PC-9 (cell line): ENCODE measurements at regions of chr4 and their contacts with region 1.

Region 1: DNA sequence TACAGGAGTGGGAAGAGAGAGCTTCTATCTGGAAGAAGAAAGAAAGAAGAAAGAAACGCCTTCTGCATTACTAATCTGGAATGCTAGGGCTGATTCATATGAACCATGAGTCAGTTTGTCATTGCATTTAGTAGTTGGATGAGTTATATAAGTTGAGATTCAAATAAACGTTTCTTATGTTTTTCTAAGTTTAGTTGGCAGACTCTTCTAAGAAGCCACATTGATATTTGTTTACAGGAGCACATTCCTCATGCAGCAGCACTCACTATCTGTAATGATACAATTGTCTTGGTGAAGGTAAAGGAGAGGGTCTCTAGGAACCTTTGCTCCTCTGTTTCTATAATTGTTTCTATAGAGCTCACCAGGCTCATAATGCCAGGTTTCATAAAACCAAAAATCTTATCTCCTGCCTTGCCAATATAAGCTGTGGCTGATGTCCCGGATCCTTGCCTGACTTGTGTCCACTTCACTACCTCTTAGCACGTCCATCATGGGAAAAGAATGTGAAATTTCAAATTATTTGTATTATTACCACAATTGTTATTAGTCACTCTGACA is 39.5 kb downstream of the HOPX start:
- DNase-seq: peak; percentile 23 to 92
- H3K4me3 ChIP-seq: no peak overlapping the region
- H3K27ac ChIP-seq: peak overlapping the region; percentile 98
- H3K4me1 ChIP-seq: peaks cover 23% of the 10 kb centered on the region
- H3K27me3 ChIP-seq: no peaks in the 10 kb centered on the region
- CTCF ChIP-seq: no peak

Region 2: DNA sequence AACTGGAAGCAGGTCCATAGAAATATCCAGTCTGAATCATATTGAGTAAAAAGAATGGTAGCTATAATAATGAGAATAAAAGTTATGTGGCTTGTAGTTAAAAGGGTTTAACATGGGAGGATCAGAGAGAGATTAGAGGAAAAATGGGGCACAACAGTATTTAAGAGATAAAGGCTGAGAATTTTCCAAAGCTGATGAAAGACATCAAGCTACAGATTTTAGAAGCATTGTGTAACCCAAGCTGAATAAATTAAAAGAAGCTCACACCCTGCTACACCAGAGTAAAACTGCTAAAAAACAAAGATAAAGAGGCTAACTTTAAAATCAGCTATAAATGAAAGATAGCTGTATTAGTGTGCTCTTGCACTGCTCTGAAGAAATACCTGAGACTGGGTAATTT is 348.5 kb before region 1 on chr4:
- CTCF ChIA-PET with region 1: no interaction called
- POLR2A ChIA-PET with region 1: interaction called, 10 read pairs
- intact Hi-C with region 1: no loop called
- DNase-seq: no peak
- H3K4me3 ChIP-seq: no peak overlapping the region
- H3K27ac ChIP-seq: no peak overlapping the region
- H3K4me1 ChIP-seq: no peaks in the 10 kb centered on the region
- H3K27me3 ChIP-seq: no peaks in the 10 kb centered on the region
- CTCF ChIP-seq: no peak

Region 3: GRCh38 chr4:56400560-56400959 is 241.0 kb before region 1 on chr4:
- CTCF ChIA-PET with region 1: interaction called, 11 read pairs
- POLR2A ChIA-PET with region 1: no interaction called
- intact Hi-C with region 1: no loop called
- DNase-seq: no peak
- H3K4me3 ChIP-seq: no peak overlapping the region
- H3K27ac ChIP-seq: no peak overlapping the region
- H3K4me1 ChIP-seq: no peaks in the 10 kb centered on the region
- H3K27me3 ChIP-seq: no peaks in the 10 kb centered on the region
- CTCF ChIP-seq: no peak

Region 4: GRCh38 chr4:56619160-56619559 is 22.4 kb before region 1 on chr4:
- CTCF ChIA-PET with region 1: interaction called, 19 read pairs
- POLR2A ChIA-PET with region 1: interaction called, 14 read pairs
- intact Hi-C with region 1: no loop called
- DNase-seq: no peak
- H3K4me3 ChIP-seq: no peak overlapping the region
- H3K27ac ChIP-seq: no peak overlapping the region
- H3K4me1 ChIP-seq: no peaks in the 10 kb centered on the region
- H3K27me3 ChIP-seq: no peaks in the 10 kb centered on the region
- CTCF ChIP-seq: no peak

Region 5: GRCh38 chr4:56690393-56690792 is 48.8 kb after region 1 on chr4:
- CTCF ChIA-PET with region 1: no interaction called
- POLR2A ChIA-PET with region 1: no interaction called
- intact Hi-C with region 1: no loop called
- DNase-seq: no peak
- H3K4me3 ChIP-seq: no peak overlapping the region
- H3K27ac ChIP-seq: no peak overlapping the region
- H3K4me1 ChIP-seq: peaks cover 3% of the 10 kb centered on the region; the same call in 1 of the 2 replicates
- H3K27me3 ChIP-seq: no peaks in the 10 kb centered on the region
- CTCF ChIP-seq: no peak